T-cell (primary cell): ENCODE measurements at regions of chr1 and their contacts with region 1.

Region 1: DNA sequence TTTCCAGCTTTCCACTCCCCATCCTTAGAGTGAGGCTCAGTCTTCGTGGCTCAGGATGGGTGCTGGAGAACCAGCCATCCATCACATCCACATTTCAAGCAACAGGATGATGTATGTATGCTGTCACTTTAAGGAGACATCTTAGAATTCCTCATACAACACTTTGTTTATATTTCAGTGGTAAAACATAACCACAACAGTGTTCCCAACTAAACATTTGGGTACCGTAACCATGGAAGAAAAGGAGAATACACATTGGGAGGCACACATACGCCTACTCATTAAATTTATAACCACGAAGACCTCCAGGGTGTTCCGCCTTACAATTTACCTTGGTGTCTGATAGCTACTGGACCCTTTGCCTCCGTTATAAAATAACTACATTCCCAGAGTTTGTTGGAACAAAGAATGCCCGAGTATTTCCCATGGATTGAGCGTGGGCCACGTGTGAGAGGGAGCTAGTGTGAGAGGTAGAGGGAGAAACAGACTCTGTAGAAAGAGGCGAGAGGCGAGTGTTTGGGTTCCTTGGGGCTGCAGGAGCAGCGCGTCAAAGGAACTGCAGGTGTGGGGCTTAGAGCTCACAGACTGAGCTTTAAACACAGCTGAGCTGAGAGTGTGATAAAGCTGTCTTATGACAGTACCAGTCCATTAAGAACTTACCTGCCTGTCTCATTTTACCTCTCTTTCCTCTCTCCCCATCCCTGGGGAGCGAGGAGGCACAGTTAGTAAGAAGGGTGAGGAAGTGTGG is 111.5 kb upstream of the USP24 start:
- DNase-seq: no peak
- ATAC-seq: no peak
- H3K4me3 ChIP-seq: no peak overlapping the region
- H3K4me3 Mint-ChIP-seq: no peak overlapping the region
- H3K27ac ChIP-seq: no peak overlapping the region
- H3K27ac Mint-ChIP-seq: no peak overlapping the region
- H3K4me1 ChIP-seq: no peaks in the 10 kb centered on the region
- H3K4me1 Mint-ChIP-seq: no peaks in the 10 kb centered on the region
- H3K27me3 ChIP-seq: no peaks in the 10 kb centered on the region
- H3K27me3 Mint-ChIP-seq: peaks cover 1 to 8% of the 10 kb centered on the region in 2 donors

Region 2: DNA sequence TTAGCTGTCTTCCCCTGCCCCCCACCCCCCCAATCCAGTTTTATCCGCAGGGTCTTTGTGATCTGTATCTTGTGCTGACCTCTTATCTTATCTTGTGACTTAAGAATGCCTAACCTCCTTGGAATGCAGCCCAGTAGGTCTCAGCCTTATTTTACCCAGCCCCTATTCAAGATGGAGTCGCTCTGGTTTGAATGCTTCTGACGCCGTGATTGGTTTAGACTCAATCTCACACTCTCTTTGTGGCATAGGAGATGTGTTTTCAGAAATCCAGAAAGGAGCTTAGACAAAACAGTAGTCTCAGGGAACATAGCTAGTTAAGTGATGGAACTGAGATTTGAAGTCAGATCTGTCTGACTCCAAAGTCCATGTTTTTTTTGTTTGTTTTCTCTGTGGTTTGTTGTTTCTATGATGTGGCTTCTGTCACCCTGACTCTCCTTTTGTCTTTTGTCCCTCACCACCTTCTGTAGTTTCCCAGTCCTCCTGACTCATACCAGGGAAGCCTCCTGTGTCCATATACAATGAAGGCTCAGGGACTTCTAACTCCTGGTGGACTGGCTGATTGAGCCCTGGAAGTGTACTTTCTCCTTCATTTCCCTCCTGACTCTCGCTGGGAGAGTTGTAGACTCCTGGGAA is 93.4 kb before region 1 on chr1:
- CTCF ChIA-PET with region 1: interaction called in 1 of 2 experiments, 13 read pairs
- POLR2A ChIA-PET with region 1: no interaction called
- DNase-seq: no peak
- ATAC-seq: no peak
- H3K4me3 ChIP-seq: no peak overlapping the region
- H3K4me3 Mint-ChIP-seq: no peak overlapping the region
- H3K27ac ChIP-seq: no peak overlapping the region
- H3K27ac Mint-ChIP-seq: no peak overlapping the region
- H3K4me1 ChIP-seq: no peaks in the 10 kb centered on the region
- H3K4me1 Mint-ChIP-seq: peaks cover 0 to 7% (median 4%) of the 10 kb centered on the region in 3 donors
- H3K27me3 ChIP-seq: peaks cover 0 to 5% of the 10 kb centered on the region in 2 experiments
- H3K27me3 Mint-ChIP-seq: peaks cover 6 to 9% of the 10 kb centered on the region in 2 donors

Region 3: DNA sequence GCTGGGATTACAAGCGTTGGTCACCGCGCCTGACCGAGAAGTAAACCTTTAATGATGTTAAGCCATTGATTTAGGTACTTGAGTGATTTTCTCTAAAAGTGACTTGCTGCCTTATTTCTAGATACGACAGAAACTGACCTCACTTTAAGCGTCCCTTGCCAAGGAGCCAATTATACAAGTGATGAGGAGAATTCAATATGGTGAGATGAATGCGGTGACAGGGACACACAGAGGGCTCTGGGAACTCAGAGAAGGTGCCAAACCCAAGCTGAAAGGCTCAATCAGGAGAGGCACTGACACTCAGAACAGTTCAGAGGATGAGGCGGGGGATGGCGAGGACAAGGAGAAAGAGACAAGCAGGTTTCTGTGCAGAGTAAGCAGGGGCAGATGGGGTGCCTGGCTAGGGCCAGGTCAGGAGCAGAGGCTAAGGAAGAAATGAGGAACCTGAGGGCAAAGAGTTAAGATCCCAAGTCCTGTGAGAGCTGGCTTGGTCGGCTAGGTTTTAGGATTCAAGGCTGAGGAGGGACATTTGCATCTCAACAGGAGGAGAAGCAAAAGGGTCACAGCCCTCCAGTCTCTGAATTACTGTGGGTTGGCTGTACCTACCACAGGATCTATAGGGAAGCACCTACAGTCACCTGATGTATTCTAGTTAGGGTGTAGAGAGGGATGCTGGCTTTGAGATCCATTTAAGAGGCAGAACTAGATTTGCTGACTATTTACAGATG is 28.3 kb before region 1 on chr1:
- CTCF ChIA-PET with region 1: no interaction called
- POLR2A ChIA-PET with region 1: no interaction called
- DNase-seq: no peak
- ATAC-seq: no peak
- H3K4me3 ChIP-seq: no peak overlapping the region
- H3K4me3 Mint-ChIP-seq: no peak overlapping the region
- H3K27ac ChIP-seq: no peak overlapping the region
- H3K27ac Mint-ChIP-seq: peak overlapping the region in 1 of 2 donors; percentile 1
- H3K4me1 ChIP-seq: no peaks in the 10 kb centered on the region
- H3K4me1 Mint-ChIP-seq: no peaks in the 10 kb centered on the region
- H3K27me3 ChIP-seq: peaks cover 0 to 7% of the 10 kb centered on the region in 2 experiments
- H3K27me3 Mint-ChIP-seq: peaks cover 8 to 17% of the 10 kb centered on the region in 2 donors

Region 4: GRCh38 chr1:55311979-55312378 is 14.7 kb before region 1 on chr1:
- CTCF ChIA-PET with region 1: no interaction called
- POLR2A ChIA-PET with region 1: no interaction called
- DNase-seq: no peak
- ATAC-seq: no peak
- H3K4me3 ChIP-seq: no peak overlapping the region
- H3K4me3 Mint-ChIP-seq: no peak overlapping the region
- H3K27ac ChIP-seq: no peak overlapping the region
- H3K27ac Mint-ChIP-seq: no peak overlapping the region
- H3K4me1 ChIP-seq: no peaks in the 10 kb centered on the region
- H3K4me1 Mint-ChIP-seq: peaks cover 0 to 2% (median 2%) of the 10 kb centered on the region in 3 donors
- H3K27me3 ChIP-seq: peaks cover 0 to 8% of the 10 kb centered on the region in 2 experiments
- H3K27me3 Mint-ChIP-seq: peaks cover 0 to 4% of the 10 kb centered on the region in 2 donors